Dendritic cell treated with granulocyte-macrophage colony-stimulating factor and Interleukin-4, amounts not matched to agents 40 ng/mL and 50 ng/mL, for 4 days (primary cell): ENCODE measurements at regions of chr1 and their contacts with region 1.

Region 1: DNA sequence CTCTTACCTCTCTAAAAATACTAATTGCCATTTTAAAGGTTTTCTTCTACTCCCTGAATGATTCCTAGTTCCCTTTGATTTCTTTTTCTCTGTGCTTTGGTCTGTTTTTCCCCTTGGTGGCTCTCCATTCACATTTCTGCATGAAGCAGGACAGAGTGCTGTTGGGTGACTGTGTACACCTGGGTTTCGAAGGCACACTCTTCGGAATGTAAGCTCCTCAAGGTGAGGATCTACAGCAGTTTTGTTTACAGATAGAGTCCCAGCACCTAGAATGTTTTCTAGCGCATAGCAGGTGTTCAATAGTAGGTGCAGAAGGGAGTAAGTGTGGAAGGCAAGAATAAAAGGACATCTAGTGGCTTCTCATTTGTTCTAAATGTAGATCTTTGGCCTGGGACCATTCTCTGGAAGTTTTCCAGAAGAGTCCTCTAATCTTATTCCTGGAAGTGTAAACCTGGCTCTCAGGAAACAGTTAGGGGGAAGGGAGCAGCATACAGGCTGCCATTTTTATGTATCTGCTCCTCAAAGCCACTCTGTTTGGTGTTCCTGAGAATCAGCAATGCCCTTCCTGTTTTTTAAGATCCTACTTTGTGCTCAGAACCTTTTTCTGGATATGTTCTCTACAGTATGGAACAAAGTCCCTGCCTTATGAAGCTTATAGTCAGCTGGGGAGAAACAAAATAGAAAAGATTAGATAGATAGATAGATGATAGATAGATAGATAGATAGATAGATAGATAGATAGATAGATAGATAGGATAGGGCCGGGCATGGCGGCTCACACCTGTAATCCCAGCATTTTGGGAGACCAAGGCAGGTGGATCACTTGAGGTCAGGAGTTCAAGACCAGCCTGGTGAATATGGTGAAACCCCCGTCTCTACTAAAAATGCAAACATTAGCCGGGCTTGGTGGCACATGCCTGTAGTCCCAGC is 22.8 kb upstream of the EFNA1 start:
- H3K4me3 Mint-ChIP-seq: no peak overlapping the region
- H3K27ac Mint-ChIP-seq: no peak overlapping the region
- H3K4me1 Mint-ChIP-seq: peaks cover 37% of the 10 kb centered on the region
- H3K27me3 Mint-ChIP-seq: peaks cover 26% of the 10 kb centered on the region

Region 2: GRCh38 chr1:155135415-155136028 is 30.7 kb after region 1 on chr1 and contains the start of gene SLC50A1:
- intact Hi-C with region 1: loop called (anchors 5 kb)
- H3K4me3 Mint-ChIP-seq: peak within 1 kb of the TSS; percentile 86
- H3K27ac Mint-ChIP-seq: peak within 1 kb of the TSS; percentile 99
- H3K4me1 Mint-ChIP-seq: peaks cover 67% of the 10 kb centered on the region
- H3K27me3 Mint-ChIP-seq: peaks cover 13% of the 10 kb centered on the region

Region 3: GRCh38 chr1:155244368-155245162 is 139.7 kb after region 1 on chr1:
- intact Hi-C with region 1: no loop called
- H3K4me3 Mint-ChIP-seq: peak overlapping the region; percentile 78
- H3K27ac Mint-ChIP-seq: peak overlapping the region; percentile 74
- H3K4me1 Mint-ChIP-seq: peaks cover 53% of the 10 kb centered on the region
- H3K27me3 Mint-ChIP-seq: no peaks in the 10 kb centered on the region